ENCODE measurements at regions of chr4 and their contacts with region 1.

Region 1: GRCh38 chr4:147910315-147910714 is 178.4 kb downstream of the ARHGAP10 start:
- DNase-seq: no peak
- ATAC-seq: no peak
- H3K4me3 Mint-ChIP-seq: no peak overlapping the region
- H3K27ac Mint-ChIP-seq: no peak overlapping the region
- H3K4me1 Mint-ChIP-seq: no peaks in the 10 kb centered on the region
- H3K27me3 Mint-ChIP-seq: no peaks in the 10 kb centered on the region

Region 2: GRCh38 chr4:147924604-147925412 is 14.5 kb after region 1 on chr4:
- CTCF ChIA-PET with region 1: interaction called, 3 read pairs
- POLR2A ChIA-PET with region 1: interaction called, 10 read pairs
- intact Hi-C with region 1: no loop called
- DNase-seq: peak; percentile 26
- ATAC-seq: no peak
- H3K4me3 Mint-ChIP-seq: no peak overlapping the region
- H3K27ac Mint-ChIP-seq: no peak overlapping the region
- H3K4me1 Mint-ChIP-seq: no peaks in the 10 kb centered on the region
- H3K27me3 Mint-ChIP-seq: no peaks in the 10 kb centered on the region